GM13977 (cell line): ENCODE measurements at regions of chr11 and their contacts with region 1.

Region 1: GRCh38 chr11:5380740-5381342 is 2.8 kb upstream of the OR51M1 start:
- DNase-seq: peak; percentile 50
- CTCF ChIP-seq: peak; percentile 75

Region 2: DNA sequence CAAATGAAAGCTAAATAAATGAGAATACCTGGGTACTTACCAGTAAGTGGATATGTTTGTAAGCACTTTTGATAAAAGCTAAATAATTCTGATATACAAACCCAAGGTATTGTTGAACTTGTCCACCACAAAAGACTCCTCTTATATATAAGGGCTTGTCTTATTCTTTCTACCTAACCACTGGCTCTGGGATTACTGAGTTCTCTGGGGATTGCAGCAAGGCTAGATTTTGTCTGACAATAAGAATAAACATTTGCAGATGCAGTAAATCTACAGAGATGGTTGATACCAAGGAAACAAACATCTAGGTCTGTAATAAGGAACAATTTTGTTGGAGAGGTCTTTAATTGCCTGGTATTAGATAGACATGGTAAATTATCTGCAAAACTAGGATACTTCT is 433.3 kb before region 1 on chr11 and contains the start of gene OR51A4:
- in situ Hi-C with region 1: no loop called
- DNase-seq: no peak
- CTCF ChIP-seq: no peak

Region 3: DNA sequence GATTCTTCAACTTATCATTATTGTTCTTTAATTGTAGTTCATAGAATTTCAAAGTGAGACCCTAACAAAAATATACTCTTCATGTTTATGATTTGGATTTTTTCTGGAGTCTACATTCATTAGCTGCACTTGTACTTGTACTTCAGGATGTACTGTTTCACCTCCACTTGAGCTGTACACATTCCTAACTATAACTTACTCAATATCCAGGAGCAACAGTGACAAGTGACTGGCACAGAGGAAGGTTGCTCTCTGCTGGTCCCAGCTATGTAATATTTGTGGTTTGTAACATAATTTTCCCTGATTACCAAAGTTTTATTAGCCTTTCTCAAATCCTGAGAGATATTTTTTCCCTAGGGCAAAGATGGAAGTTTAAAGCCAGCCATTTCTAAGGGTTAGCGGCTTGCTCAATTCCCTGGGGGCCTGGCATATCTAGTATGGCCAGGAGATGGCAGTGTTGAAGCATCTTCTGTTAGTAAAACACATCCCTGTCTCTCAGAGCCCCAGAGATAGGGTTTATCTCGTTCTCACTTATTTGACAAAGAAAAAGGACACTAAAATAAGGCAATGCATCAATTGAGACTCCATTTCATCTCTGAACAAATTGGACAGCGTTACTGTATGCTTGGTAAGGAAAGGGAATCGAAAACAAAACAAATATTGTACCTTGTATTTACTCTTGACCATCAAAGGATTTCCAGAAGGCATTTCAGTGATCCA is 256.9 kb before region 1 on chr11:
- in situ Hi-C with region 1: loop called (anchors 25 kb)
- DNase-seq: peak; percentile 23
- CTCF ChIP-seq: peak; percentile 76

Region 4: DNA sequence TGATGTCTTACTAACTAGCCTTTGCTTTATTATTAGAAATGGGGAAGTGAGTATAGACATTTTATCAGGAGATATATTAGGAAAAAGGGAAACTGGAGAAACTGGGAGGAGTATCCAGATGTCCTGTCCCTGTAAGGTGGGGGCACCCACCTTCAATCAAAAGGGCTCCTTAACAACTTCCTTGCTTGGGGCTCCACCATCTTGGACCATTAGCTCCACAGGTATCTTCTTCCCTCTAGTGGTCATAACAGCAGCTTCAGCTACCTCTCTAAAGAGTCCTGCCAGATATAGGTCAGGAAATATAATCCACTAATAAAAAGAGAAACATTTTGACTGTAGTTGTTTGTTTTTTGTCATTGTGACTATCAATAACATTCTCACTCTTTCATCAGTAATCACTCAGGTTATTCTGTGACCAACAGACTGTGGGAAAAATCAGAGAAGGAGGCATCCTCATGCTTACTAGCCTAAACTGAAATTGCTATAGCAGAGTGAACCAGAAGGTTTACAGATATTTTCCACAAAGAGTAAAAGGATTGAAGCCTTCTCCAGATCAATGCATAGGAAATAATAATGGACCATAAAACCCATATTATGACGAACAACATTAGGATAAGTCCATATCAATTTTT is 89.5 kb before region 1 on chr11:
- in situ Hi-C with region 1: no loop called
- DNase-seq: peak; percentile 59
- CTCF ChIP-seq: peak; percentile 67